Naive thymus-derived CD4-positive, alpha-beta T cell (primary cell): ENCODE measurements at regions of chr9 and their contacts with region 1.

Region 1: DNA sequence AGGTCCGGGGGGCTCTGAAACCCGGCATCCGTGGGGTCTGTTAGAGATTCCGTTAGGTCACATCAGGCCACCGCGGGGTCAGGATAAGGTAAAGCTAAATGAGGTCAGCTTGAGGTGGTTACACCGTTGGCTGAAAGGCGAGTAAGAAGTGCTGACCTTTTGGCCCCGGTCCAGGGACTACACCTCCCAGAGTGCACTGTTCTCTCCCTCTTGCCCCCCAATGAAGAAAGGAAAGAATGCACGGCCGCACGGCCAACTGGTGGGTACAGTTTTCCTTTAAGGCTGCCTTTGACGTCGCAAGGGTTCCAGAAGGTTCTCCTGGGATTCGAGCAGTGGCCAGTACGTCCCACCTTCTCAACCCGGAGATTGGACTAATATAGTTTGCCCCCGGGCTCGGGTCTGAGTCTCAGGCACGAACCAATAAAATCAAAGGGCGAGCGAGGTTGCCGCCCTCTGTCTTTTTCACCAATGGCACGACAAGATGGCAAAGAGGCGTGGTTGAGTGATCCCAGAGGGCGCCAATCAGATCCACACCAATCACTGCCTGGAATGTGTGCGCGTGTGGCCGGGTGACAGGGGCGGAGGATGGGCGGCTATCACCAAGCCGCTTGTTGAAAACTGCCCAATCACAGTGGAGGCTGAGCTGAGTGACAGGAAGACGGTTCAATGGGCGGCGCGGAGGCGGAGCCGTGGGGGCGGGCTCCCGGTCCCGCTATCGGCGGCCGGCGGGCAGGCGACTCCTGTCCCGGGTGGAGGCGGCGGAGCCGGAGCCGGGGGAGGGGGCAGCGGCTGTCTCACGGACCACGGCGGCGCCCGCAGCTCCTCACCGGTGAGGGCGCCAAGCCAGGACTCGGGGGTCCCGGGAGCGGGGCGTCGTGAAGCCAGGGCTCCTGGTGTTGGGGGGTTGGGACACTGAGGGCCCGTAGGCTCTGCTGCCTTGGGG is at the start of gene DNAJB5:
- DNase-seq: peak; percentile 96 to 98 (median 97)
- ATAC-seq: peak; percentile 96
- H3K4me3 ChIP-seq: peak within 1 kb of the TSS; percentile 77
- H3K4me3 Mint-ChIP-seq: peak within 1 kb of the TSS; percentile 85 to 100 (median 96)
- H3K27ac ChIP-seq: peak within 1 kb of the TSS; percentile 77
- H3K27ac Mint-ChIP-seq: peak within 1 kb of the TSS; percentile 64 to 94 (median 89)
- H3K4me1 ChIP-seq: peaks cover 19 to 37% of the 10 kb centered on the region in 2 donors
- H3K4me1 Mint-ChIP-seq: peaks cover 35 to 62% (median 49%) of the 10 kb centered on the region in 7 donors
- H3K27me3 ChIP-seq: no peaks in the 10 kb centered on the region
- H3K27me3 Mint-ChIP-seq: no peaks in the 10 kb centered on the region
- total RNA-seq, gene DNAJB5: 1.1 to 3.7 (median 1.4) TPM

Region 2: DNA sequence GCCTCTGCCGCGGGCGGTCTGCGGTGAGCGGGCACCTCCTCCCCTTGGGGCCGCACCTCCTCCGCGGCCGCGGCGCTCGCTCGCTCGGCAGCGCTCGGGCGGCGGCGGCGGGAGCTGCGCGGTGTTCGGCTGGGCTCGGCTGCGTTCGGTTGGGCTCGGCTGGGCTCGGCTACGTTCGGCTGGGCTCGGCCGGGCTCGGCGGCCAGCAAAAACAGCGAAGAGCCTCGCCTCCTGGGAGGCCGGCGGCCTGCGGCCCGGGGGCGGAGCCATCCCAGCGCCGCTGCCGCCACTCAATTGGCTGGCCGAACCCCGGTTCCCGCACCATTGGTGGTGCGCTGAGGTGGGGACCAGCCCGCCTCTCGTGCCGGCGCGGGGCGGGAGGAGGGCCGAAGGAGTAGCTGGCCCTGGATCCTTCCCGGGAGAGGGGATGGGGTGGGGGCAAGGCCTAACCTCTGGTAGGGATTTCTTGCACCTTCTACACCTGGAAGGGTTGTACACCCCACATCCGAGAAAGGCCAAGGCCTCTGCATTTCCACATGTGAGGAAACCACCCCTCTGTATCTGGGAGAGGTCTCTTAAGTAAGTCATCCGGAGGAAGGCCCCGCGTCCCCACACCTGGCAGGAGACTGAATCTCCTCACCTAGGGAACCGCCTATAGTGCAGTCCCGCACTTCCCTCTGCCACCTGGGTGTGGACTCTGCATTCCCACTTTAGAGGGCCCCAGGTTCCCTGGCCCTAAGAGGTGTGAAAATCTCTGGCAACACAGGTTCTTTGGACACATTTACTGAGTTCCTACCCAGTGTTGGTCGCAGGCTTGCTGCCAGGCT is 466.1 kb before region 1 on chr9 and contains the start of gene ENHO:
- CTCF ChIA-PET with region 1: no interaction called
- POLR2A ChIA-PET with region 1: no interaction called
- intact Hi-C with region 1: loop called in 1 of 2 experiments (anchors 10 kb)
- DNase-seq: peak; percentile 77 to 97 (median 91)
- ATAC-seq: peak; percentile 97
- H3K4me3 ChIP-seq: peak within 1 kb of the TSS; percentile 66
- H3K4me3 Mint-ChIP-seq: peak within 1 kb of the TSS; percentile 70 to 83 (median 78)
- H3K27ac ChIP-seq: peak within 1 kb of the TSS; percentile 61
- H3K27ac Mint-ChIP-seq: peak within 1 kb of the TSS in 7 of 9 donors; percentile 18 to 79 (median 61)
- H3K4me1 ChIP-seq: peaks cover 7 to 10% of the 10 kb centered on the region in 2 donors
- H3K4me1 Mint-ChIP-seq: peaks cover 5 to 19% (median 10%) of the 10 kb centered on the region in 7 donors
- H3K27me3 ChIP-seq: no peaks in the 10 kb centered on the region
- H3K27me3 Mint-ChIP-seq: peaks cover 0 to 55% (median 8%) of the 10 kb centered on the region in 5 donors
- total RNA-seq, gene ENHO: 0.56 to 1.9 TPM in 2 of 5 experiments, not detected in the others

Region 3: DNA sequence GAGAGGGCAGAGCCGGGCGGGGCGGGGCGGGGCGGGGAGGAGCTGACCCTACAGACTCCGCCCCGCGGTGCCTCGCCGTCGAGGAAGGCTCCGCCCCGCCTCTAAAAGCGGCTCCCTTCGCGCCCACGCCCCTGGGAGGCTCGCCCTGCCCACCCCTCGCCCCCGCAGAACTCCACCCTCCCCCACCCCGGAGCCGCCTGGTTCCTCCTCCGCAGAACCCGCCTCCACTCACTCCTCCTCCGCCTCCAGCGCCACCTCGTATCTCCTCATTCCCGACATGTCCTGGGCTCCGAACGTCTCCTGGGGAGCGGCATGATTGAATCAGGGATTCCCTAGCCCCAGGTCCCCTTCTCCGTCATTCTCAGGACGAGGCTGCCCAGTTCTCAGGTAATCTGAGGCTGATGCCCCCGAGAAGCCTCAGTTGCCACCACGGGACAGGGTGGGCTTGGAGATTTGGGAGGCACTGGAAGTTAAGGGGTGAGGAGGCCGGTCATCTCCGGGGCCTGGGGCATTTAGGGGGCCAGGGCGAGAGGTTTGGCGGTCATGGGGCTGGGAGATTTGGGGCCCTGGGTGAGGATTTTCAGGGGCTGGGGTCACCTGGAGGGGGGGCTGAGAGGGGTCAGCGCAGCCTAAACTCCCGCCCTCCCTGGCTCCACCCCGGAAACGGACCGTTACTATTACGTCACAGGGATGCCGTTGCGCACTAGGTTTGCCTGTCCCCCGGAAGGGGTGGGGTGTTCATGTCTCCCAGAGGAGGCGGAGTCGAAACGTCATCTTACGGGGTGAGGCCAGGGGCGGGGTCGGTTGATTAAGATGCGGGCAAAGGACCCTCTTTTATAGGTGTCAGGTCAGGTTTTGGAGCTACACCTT is 323.7 kb before region 1 on chr9:
- CTCF ChIA-PET with region 1: no interaction called
- POLR2A ChIA-PET with region 1: no interaction called
- intact Hi-C with region 1: loop called (anchors 1 to 5 kb)
- DNase-seq: peak; percentile 74 to 90 (median 84)
- ATAC-seq: peak; percentile 90
- H3K4me3 ChIP-seq: peak overlapping the region; percentile 99
- H3K4me3 Mint-ChIP-seq: peak overlapping the region; percentile 89 to 97 (median 94)
- H3K27ac ChIP-seq: peak overlapping the region; percentile 98
- H3K27ac Mint-ChIP-seq: peak overlapping the region; percentile 86 to 98 (median 97)
- H3K4me1 ChIP-seq: peaks cover 33 to 40% of the 10 kb centered on the region in 2 donors
- H3K4me1 Mint-ChIP-seq: peaks cover 37 to 58% (median 50%) of the 10 kb centered on the region in 7 donors
- H3K27me3 ChIP-seq: no peaks in the 10 kb centered on the region
- H3K27me3 Mint-ChIP-seq: no peaks in the 10 kb centered on the region

Region 4: DNA sequence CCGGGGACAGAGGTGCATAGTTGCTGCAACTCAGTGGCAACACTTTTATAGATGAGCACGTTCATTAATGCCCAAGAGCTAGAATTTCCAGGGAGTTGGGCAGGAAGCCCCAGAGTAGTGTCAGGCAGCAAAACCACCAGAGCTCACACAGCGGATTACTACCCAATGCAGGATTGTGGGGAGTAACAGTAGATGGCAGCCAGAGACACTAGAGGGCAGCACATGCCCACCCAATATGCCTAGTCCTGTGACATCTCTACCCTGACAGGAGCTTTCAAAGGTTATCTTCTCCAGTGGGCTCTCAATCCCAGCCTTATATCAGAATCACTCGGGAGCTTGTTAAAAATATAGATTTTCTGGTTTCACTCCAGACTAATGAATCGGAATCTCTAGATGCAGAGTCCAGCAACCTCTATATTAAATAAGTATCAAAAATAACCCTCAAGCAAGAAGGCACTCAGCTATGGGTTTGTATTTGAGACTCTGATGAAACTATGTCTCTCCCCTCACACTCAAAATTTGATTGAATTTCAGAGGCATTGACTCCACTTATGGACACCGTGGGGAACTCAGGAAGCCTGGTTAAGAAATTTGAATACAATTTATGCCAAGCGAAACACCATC is 89.6 kb before region 1 on chr9:
- CTCF ChIA-PET with region 1: interaction called, 25 read pairs
- POLR2A ChIA-PET with region 1: interaction called, 3 read pairs
- intact Hi-C with region 1: loop called (anchors 1 kb)
- DNase-seq: peak; percentile 59 to 84 (median 77)
- ATAC-seq: peak; percentile 100
- H3K4me3 ChIP-seq: no peak overlapping the region
- H3K4me3 Mint-ChIP-seq: no peak overlapping the region
- H3K27ac ChIP-seq: no peak overlapping the region
- H3K27ac Mint-ChIP-seq: no peak overlapping the region
- H3K4me1 ChIP-seq: no peaks in the 10 kb centered on the region
- H3K4me1 Mint-ChIP-seq: no peaks in the 10 kb centered on the region
- H3K27me3 ChIP-seq: no peaks in the 10 kb centered on the region
- H3K27me3 Mint-ChIP-seq: peaks cover 27 to 59% (median 36%) of the 10 kb centered on the region in 5 donors

Region 5: DNA sequence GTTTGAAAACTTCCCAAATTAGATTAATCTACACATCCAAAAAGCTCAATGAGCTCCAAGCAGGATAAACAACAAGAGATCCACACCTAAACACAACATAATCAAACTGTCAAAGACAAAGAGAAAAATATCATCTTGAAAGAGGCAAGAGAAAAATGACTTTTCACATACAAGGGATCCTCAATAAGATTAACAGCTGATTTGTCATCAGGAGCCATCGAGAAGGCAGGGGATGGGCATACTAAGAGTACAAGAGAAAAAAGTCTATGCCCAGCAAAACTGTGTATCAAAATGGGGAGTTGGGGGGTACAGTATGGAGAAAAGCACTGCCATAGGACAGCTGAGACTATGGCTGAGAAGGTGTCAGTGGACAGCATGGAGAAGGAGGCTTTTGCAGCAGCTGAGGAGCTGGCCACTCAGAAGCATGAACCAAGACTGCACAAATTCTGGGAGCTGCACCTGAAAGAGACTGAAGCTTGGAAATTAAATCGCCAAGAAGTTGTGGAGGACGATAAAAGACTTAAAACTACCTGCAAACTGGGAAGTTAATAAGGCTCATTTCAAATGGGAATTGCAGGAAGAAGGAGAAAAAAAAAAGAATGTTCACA is 21.2 kb after region 1 on chr9:
- CTCF ChIA-PET with region 1: no interaction called
- POLR2A ChIA-PET with region 1: no interaction called
- intact Hi-C with region 1: no loop called
- DNase-seq: no peak
- ATAC-seq: no peak
- H3K4me3 ChIP-seq: no peak overlapping the region
- H3K4me3 Mint-ChIP-seq: no peak overlapping the region
- H3K27ac ChIP-seq: no peak overlapping the region
- H3K27ac Mint-ChIP-seq: no peak overlapping the region
- H3K4me1 ChIP-seq: peaks cover 0 to 4% of the 10 kb centered on the region in 2 donors
- H3K4me1 Mint-ChIP-seq: peaks cover 0 to 17% (median 13%) of the 10 kb centered on the region in 7 donors
- H3K27me3 ChIP-seq: no peaks in the 10 kb centered on the region
- H3K27me3 Mint-ChIP-seq: no peaks in the 10 kb centered on the region

Region 6: GRCh38 chr9:35079426-35080341 is 90.4 kb after region 1 on chr9 and contains the start of gene FANCG:
- CTCF ChIA-PET with region 1: no interaction called
- POLR2A ChIA-PET with region 1: no interaction called
- intact Hi-C with region 1: loop called in 1 of 2 experiments (anchors 1 kb)
- DNase-seq: peak; percentile 60 to 87 (median 73)
- ATAC-seq: peak; percentile 98
- H3K4me3 ChIP-seq: peak within 1 kb of the TSS; percentile 84
- H3K4me3 Mint-ChIP-seq: peak within 1 kb of the TSS; percentile 84 to 98 (median 94)
- H3K27ac ChIP-seq: peak within 1 kb of the TSS; percentile 74
- H3K27ac Mint-ChIP-seq: peak within 1 kb of the TSS; percentile 76 to 99 (median 91)
- H3K4me1 ChIP-seq: peaks cover 8 to 10% of the 10 kb centered on the region in 2 donors
- H3K4me1 Mint-ChIP-seq: peaks cover 13 to 38% (median 24%) of the 10 kb centered on the region in 7 donors
- H3K27me3 ChIP-seq: no peaks in the 10 kb centered on the region
- H3K27me3 Mint-ChIP-seq: no peaks in the 10 kb centered on the region
- total RNA-seq, gene FANCG: 19.6 to 84.9 (median 26.7) TPM

Region 7: GRCh38 chr9:35161713-35162604 is 172.7 kb after region 1 on chr9 and contains the start of gene UNC13B:
- CTCF ChIA-PET with region 1: no interaction called
- POLR2A ChIA-PET with region 1: no interaction called
- intact Hi-C with region 1: loop called in 1 of 2 experiments (anchors 1 kb)
- DNase-seq: peak; percentile 46 to 75 (median 60)
- ATAC-seq: peak; percentile 94
- H3K4me3 ChIP-seq: peak within 1 kb of the TSS; percentile 57
- H3K4me3 Mint-ChIP-seq: peak within 1 kb of the TSS; percentile 91 to 97 (median 93)
- H3K27ac ChIP-seq: peak within 1 kb of the TSS; percentile 9
- H3K27ac Mint-ChIP-seq: peak within 1 kb of the TSS in 8 of 9 donors; percentile 17 to 86 (median 48)
- H3K4me1 ChIP-seq: no peaks in the 10 kb centered on the region
- H3K4me1 Mint-ChIP-seq: peaks cover 0 to 40% (median 32%) of the 10 kb centered on the region in 7 donors
- H3K27me3 ChIP-seq: no peaks in the 10 kb centered on the region
- H3K27me3 Mint-ChIP-seq: peaks cover 0 to 31% (median 0%) of the 10 kb centered on the region in 5 donors
- total RNA-seq, gene UNC13B: 0.24 to 1.6 (median 1.3) TPM